AG04450 (cell line): ENCODE measurements at regions of chr10 and their contacts with region 1.

Region 1: GRCh38 chr10:96642973-96643372 is 56.2 kb upstream of the TM9SF3 start:
- DNase-seq: no peak
- H3K4me3 ChIP-seq: no peak overlapping the region
- H3K27ac ChIP-seq: no peak overlapping the region
- H3K27me3 ChIP-seq: peaks cover 15% of the 10 kb centered on the region
- CTCF ChIP-seq: peak; percentile 46

Region 2: GRCh38 chr10:96614515-96614914 is 28.5 kb before region 1 on chr10:
- CTCF ChIA-PET with region 1: no interaction called
- POLR2A ChIA-PET with region 1: no interaction called
- DNase-seq: peak; percentile 15
- H3K4me3 ChIP-seq: no peak overlapping the region
- H3K27ac ChIP-seq: no peak overlapping the region
- H3K27me3 ChIP-seq: peaks cover 5% of the 10 kb centered on the region
- CTCF ChIP-seq: no peak

Region 3: DNA sequence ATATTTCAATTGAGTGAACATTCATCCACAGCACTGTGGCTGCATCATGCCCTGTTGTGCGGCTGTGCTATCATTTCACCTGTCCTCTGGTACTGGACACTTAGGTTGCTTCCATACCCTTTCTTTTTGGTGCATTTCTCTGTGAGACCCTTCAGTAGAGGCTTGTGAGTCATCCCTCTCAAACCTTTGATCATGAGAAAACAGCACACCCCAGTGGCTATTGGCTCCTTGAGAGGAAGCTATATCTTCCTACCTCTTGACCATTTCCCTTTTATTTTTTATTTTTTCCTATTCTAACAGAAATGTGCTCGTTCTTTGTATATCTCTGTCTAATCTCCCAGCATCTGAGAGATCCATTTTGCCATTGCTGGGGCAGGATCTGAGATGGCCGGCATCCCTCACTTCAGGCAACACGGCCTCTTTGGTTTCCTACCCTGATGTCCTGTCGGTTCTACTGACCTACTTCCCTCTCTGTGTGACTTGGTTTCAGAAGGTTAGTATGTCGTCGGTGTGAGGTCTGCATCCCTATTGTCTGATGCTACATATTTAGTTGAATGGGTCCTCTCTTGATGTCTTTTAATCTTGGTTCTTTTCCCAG is 101.1 kb after region 1 on chr10:
- CTCF ChIA-PET with region 1: interaction called, 24 read pairs
- POLR2A ChIA-PET with region 1: no interaction called
- DNase-seq: no peak
- H3K4me3 ChIP-seq: no peak overlapping the region
- H3K27ac ChIP-seq: no peak overlapping the region
- H3K27me3 ChIP-seq: no peaks in the 10 kb centered on the region
- CTCF ChIP-seq: peak; percentile 41